ENCODE measurements at regions of chr2 and their contacts with region 1.

Region 1: GRCh38 chr2:235116885-235117492 is 165.2 kb downstream of the SH3BP4 start:
- DNase-seq: peak; percentile 50
- H3K4me3 Mint-ChIP-seq: no peak overlapping the region
- H3K27ac Mint-ChIP-seq: no peak overlapping the region
- H3K4me1 Mint-ChIP-seq: no peaks in the 10 kb centered on the region
- H3K27me3 Mint-ChIP-seq: peaks cover 27% of the 10 kb centered on the region
- CTCF ChIP-seq: peak; percentile 60

Region 2: GRCh38 chr2:234533626-234534025 is 583.4 kb before region 1 on chr2:
- CTCF ChIA-PET with region 1: interaction called, 10 read pairs
- POLR2A ChIA-PET with region 1: no interaction called
- intact Hi-C with region 1: no loop called
- DNase-seq: no peak
- H3K4me3 Mint-ChIP-seq: no peak overlapping the region
- H3K27ac Mint-ChIP-seq: no peak overlapping the region
- H3K4me1 Mint-ChIP-seq: no peaks in the 10 kb centered on the region
- H3K27me3 Mint-ChIP-seq: no peaks in the 10 kb centered on the region
- CTCF ChIP-seq: no peak

Region 3: DNA sequence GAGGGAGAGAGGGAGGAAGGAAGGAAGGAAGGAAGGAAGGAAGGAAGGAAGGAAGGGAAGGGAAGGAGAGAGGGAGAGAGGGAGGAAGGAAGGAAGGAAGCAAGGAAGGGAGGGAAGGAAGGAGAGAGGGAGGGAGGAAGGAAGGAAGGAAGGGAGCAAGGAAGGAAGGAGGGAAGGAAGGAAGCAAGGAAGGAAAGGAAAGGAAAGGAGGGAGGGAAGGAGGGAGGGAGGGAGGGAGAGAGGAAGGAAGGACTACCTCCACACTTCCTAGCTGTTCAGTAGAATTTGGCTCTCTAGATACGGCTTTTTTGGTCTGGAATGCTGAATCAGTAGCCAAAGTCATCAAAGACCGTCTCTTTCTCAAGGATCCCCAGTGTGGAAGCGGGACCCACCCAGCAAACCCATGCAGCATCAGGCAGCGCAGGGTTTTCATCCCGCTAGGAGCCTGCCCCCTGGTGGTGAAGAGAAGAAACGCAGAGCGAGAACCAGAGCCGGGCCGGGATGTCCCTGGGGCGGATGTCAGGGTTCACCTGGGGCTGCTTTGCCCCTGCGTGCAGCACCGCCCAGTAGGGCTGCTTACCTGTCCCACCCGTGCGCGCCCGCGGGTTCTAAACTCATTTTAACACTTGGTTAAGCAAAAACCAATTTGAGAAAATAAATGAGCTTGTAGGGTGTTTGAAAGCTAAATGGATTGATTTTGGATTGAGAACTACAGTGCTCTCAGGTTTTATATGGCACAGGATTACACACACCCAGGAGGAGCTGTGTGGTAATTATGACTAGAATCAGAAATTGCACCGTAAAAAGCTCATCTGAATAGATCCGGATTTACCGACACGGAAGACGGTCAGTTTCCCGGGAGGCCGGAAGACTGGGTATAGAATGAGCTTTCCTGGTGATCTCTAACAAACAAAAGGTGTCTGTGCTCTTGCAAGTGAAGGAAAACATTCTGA is 572.1 kb before region 1 on chr2:
- CTCF ChIA-PET with region 1: interaction called, 34 read pairs
- POLR2A ChIA-PET with region 1: no interaction called
- intact Hi-C with region 1: loop called (anchors 1 kb)
- DNase-seq: peak; percentile 68
- H3K4me3 Mint-ChIP-seq: no peak overlapping the region
- H3K27ac Mint-ChIP-seq: no peak overlapping the region
- H3K4me1 Mint-ChIP-seq: no peaks in the 10 kb centered on the region
- H3K27me3 Mint-ChIP-seq: no peaks in the 10 kb centered on the region
- CTCF ChIP-seq: peak; percentile 87

Region 4: GRCh38 chr2:234550511-234551107 is 566.4 kb before region 1 on chr2:
- CTCF ChIA-PET with region 1: interaction called, 34 read pairs
- POLR2A ChIA-PET with region 1: no interaction called
- intact Hi-C with region 1: loop called (anchors 1 kb)
- DNase-seq: peak; percentile 77
- H3K4me3 Mint-ChIP-seq: no peak overlapping the region
- H3K27ac Mint-ChIP-seq: no peak overlapping the region
- H3K4me1 Mint-ChIP-seq: peaks cover 5% of the 10 kb centered on the region
- H3K27me3 Mint-ChIP-seq: no peaks in the 10 kb centered on the region
- CTCF ChIP-seq: peak; percentile 90

Region 5: GRCh38 chr2:234555720-234556119 is 561.3 kb before region 1 on chr2:
- CTCF ChIA-PET with region 1: interaction called, 11 read pairs
- POLR2A ChIA-PET with region 1: no interaction called
- intact Hi-C with region 1: loop called (anchors 1 kb)
- DNase-seq: no peak
- H3K4me3 Mint-ChIP-seq: no peak overlapping the region
- H3K27ac Mint-ChIP-seq: no peak overlapping the region
- H3K4me1 Mint-ChIP-seq: no peaks in the 10 kb centered on the region
- H3K27me3 Mint-ChIP-seq: no peaks in the 10 kb centered on the region
- CTCF ChIP-seq: no peak

Region 6: DNA sequence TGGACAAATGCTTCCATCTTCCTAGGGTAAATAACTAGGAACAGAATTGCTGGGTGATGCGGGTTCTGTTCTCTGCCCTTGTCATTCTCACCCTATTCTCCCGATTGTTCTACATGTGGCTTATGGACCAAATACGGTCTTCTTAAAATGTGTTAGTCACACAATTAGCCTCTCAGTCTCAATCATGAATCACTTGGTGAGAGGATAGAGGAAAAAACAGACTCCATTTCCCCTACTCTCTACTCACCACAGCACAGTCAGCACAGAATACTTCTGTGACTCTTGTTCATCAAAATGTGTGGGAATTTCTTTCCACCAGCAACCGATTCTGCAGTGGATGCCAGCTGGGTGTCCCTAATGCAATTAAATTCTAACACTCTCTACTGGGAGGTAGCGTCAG is 39.9 kb before region 1 on chr2:
- CTCF ChIA-PET with region 1: no interaction called
- POLR2A ChIA-PET with region 1: no interaction called
- intact Hi-C with region 1: no loop called
- DNase-seq: no peak
- H3K4me3 Mint-ChIP-seq: no peak overlapping the region
- H3K27ac Mint-ChIP-seq: no peak overlapping the region
- H3K4me1 Mint-ChIP-seq: no peaks in the 10 kb centered on the region
- H3K27me3 Mint-ChIP-seq: no peaks in the 10 kb centered on the region
- CTCF ChIP-seq: no peak

Region 7: DNA sequence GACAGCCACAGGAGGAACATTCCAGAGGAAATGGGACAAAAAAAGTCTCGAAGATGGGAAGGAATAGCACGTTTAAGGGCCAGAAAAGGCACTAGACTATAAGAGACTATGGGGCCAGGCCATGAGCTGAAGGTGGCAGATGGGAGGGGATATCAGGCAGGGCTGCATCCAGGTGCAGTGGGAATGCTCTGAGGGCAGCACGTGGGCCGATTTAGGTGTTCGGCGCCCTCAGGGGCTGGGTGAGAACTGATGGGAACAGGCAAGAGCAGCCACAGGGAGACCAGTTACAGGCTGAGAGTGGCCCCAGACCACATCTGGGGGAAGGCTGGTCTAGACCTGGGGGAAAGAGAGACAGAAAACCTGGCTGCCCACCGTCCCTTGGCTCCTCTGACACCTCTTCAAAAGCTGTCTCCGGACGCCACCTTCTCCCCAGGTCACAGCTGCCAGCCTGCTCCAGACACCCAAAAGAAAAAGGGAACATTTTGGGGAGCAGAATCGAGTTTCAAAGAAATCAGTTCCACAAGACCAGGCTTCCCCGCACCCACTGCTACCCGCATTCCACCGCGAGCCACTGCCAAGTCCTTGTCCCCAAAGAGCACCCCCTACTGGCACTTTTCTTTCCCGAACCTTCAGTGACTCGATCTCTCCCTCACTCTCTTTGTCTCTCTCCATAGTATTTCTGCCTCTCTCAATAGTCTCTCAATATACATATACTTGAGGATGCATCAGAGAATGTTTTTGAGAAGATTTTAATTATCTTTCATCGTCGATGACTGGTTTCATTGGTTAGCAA is 186.7 kb after region 1 on chr2:
- CTCF ChIA-PET with region 1: no interaction called
- POLR2A ChIA-PET with region 1: no interaction called
- intact Hi-C with region 1: no loop called
- DNase-seq: no peak
- H3K4me3 Mint-ChIP-seq: no peak overlapping the region
- H3K27ac Mint-ChIP-seq: no peak overlapping the region
- H3K4me1 Mint-ChIP-seq: peaks cover 8% of the 10 kb centered on the region
- H3K27me3 Mint-ChIP-seq: peaks cover 33% of the 10 kb centered on the region
- CTCF ChIP-seq: no peak

Measured in MCF 10A (cell line).